A549 (cell line): ENCODE measurements at regions of chr12 and their contacts with region 1.

Region 1: GRCh38 chr12:122860346-122861090 is 25.3 kb downstream of the HIP1R start:
- DNase-seq: peak; percentile 72 to 83
- ATAC-seq: peak; percentile 63 to 87
- H3K4me3 ChIP-seq: no peak overlapping the region
- H3K27ac ChIP-seq: 0 out of 6 replicates have a peak overlapping the region, but pooled peaks of 1 of the 2 experiments have one; percentile 20
- H3K4me1 ChIP-seq: no peaks in the 10 kb centered on the region
- CTCF ChIP-seq: peak; percentile 93
- EP300 ChIP-seq: no peak
- POLR2A ChIP-seq: no peak
- RAD21 ChIP-seq: peak; percentile 96 to 98

Region 2: GRCh38 chr12:122793685-122794106 is 66.8 kb before region 1 on chr12:
- CTCF ChIA-PET with region 1: interaction called, 95 read pairs
- POLR2A ChIA-PET with region 1: no interaction called
- DNase-seq: peak; percentile 63 to 73
- ATAC-seq: peak; percentile 89 to 90
- H3K4me3 ChIP-seq: no peak overlapping the region
- H3K27ac ChIP-seq: no peak overlapping the region
- H3K4me1 ChIP-seq: no peaks in the 10 kb centered on the region
- CTCF ChIP-seq: peak; percentile 86
- EP300 ChIP-seq: no peak
- POLR2A ChIP-seq: no peak
- RAD21 ChIP-seq: peak; percentile 80 to 86

Region 3: DNA sequence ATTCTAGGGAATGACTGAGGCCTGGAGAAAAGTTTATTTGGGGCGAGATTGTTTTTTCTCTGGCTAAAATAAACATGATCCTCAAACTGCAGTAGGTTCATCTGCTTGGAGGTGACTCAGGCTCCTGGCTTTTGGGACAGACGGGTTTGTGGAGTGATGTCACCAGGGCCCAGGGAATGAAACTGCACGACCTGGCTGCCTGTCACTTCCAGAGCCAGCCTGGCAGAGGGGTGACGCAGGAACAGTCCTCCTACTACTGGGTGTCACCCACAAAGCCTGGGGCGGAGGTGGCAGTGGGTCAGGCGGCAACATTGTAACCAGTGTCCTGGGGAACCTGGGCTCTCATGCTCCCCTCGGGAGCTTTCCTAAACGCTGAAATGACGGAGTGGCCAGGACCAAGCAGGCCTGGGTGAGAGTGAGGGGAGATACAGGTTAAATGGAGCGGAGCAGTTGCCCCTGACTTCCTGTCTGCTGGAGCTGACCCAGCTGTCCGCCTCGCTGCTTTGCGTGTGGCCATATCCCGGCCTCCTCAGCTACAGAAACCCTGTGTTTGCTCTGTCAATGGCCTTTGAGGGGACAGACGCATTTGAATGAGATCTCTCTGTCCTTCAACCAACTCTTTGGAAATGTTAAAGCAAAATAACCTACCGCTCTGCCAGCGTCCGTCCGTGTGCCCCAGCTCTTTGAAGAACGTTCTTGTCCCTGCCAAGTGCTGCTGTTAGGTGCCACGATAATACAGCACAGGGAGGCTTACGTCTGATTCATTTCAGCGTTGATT is 18.8 kb before region 1 on chr12:
- CTCF ChIA-PET with region 1: interaction called, 95 read pairs
- POLR2A ChIA-PET with region 1: no interaction called
- DNase-seq: peak in 1 of 2 experiments; percentile 50
- ATAC-seq: peak; percentile 31 to 44; a peak in 3 of 6 replicates
- H3K4me3 ChIP-seq: no peak overlapping the region
- H3K27ac ChIP-seq: peak overlapping the region in 1 of 2 experiments; percentile 60; a peak in 4 of 6 replicates
- H3K4me1 ChIP-seq: peaks cover 35% of the 10 kb centered on the region
- CTCF ChIP-seq: no peak
- EP300 ChIP-seq: no peak
- POLR2A ChIP-seq: no peak
- RAD21 ChIP-seq: no peak

Region 4: DNA sequence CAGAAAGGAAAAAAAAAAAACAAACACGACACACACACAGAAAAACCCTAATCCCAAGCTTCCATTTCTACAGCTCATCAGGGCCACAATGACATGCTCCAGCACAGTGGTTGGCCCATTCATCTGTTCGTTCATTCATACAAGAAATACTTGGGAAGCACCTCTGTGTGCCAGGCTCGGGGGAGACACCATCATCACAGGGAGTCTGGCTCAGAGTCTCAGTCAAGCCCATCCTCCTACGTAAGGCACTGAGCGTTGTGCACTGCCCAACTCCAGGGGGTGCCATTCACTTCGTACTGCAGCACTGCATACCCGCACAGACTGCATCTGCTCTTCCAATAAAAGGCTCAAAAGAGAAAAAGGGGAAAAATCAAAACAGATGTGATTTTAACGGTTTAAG is 20.1 kb after region 1 on chr12:
- CTCF ChIA-PET with region 1: interaction called, 111 read pairs
- POLR2A ChIA-PET with region 1: no interaction called
- DNase-seq: peak; percentile 65 to 74
- ATAC-seq: peak; percentile 97 to 98
- H3K4me3 ChIP-seq: no peak overlapping the region
- H3K27ac ChIP-seq: no peak overlapping the region
- H3K4me1 ChIP-seq: peaks cover 11% of the 10 kb centered on the region
- CTCF ChIP-seq: peak; percentile 54
- EP300 ChIP-seq: no peak
- POLR2A ChIP-seq: no peak
- RAD21 ChIP-seq: peak; percentile 58 to 79; a peak in 4 of 5 replicates

Region 5: DNA sequence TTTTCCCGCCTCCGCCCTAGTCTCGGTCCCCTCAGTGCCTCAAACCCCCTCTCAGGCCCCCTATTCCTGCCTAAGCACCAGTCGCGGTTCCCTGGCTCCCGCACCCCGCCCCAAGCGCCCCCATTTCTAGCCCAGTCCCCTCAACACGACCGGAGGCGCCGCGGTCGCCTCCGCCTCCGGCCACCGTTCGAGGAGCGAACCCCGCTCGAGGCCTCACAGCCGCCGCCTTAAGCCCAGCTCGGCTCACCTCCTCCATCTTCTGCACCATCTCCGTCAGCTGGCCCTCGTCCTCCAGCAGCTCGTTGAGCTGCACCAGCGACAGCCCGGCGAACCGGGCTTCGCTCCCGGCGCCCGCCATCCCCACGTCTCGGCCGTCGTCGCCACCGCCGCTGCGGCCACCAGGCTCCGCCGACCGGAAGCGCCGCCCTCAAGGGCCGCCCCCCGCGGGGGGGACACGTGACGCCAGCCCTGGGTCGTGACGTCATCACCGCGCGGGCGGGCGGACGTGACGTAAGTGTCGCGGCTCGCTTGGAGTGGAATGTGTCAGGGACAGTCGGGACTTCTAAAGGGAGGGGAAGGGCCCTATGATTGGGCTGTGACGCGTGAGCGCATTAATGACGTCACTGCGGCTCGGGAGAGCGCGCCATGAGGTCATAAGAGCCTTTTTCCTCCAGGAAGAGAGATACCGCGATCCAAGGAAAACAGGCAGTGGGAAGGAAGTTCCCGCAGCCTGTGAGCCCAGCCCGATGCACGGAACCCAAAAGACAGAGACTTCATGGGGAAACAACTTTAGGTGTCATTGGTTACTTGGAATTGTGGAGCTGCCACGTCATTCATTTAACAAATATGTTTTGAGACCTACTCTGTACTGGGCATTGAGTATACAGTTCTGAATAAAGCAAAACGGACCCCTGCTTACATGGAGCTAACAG is 35.5 kb after region 1 on chr12 and contains the start of gene VPS37B:
- CTCF ChIA-PET with region 1: interaction called, 10 read pairs
- POLR2A ChIA-PET with region 1: no interaction called
- DNase-seq: peak; percentile 87 to 98
- ATAC-seq: peak; percentile 77 to 85
- H3K4me3 ChIP-seq: peak within 1 kb of the TSS; percentile 89
- H3K27ac ChIP-seq: peak within 1 kb of the TSS; percentile 89 to 97
- H3K4me1 ChIP-seq: peaks cover 51% of the 10 kb centered on the region
- CTCF ChIP-seq: no peak
- EP300 ChIP-seq: no peak
- POLR2A ChIP-seq: peak; percentile 88
- RAD21 ChIP-seq: 0 out of 5 replicates have a peak, but pooled peaks of 1 of the 2 experiments have one; percentile 21
- polyA plus RNA-seq, gene VPS37B: 14.4 and 18.6 TPM in 2 replicates

Region 6: DNA sequence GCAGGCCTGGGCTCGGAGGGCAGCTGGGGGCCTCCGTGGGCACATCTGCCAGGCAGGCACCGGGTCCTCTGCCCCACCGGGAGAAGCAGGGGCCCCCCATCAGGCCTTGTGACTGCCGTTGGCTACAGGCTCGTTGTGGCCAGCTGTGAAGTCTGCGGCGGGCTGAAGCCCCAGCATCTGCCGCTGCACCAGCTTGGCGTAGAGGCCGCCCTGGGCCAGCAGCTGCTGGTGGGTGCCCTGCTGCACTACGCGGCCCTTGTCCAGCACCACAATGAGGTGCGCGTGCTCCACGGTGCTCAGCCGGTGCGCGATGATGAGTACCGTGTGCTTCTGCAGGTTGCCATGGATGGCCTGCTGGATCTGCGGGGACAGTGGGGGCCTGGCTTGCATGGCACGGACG is 69.3 kb after region 1 on chr12:
- CTCF ChIA-PET with region 1: interaction called, 522 read pairs
- POLR2A ChIA-PET with region 1: no interaction called
- DNase-seq: no peak
- ATAC-seq: peak; percentile 14 to 26; a peak in 2 of 6 replicates
- H3K4me3 ChIP-seq: no peak overlapping the region
- H3K27ac ChIP-seq: no peak overlapping the region
- H3K4me1 ChIP-seq: 0 out of 3 replicates have a peak, but pooled peaks cover 3% of the 10 kb centered on the region
- CTCF ChIP-seq: no peak
- EP300 ChIP-seq: no peak
- POLR2A ChIP-seq: no peak
- RAD21 ChIP-seq: no peak

Region 7: GRCh38 chr12:122965851-122966722 is 105.6 kb after region 1 on chr12 and contains the start of gene ABCB9:
- CTCF ChIA-PET with region 1: interaction called, 11 read pairs
- POLR2A ChIA-PET with region 1: no interaction called
- DNase-seq: peak; percentile 90 to 93
- ATAC-seq: peak; percentile 88 to 96
- H3K4me3 ChIP-seq: peak within 1 kb of the TSS; percentile 77
- H3K27ac ChIP-seq: peak within 1 kb of the TSS; percentile 75 to 83
- H3K4me1 ChIP-seq: peaks cover 21% of the 10 kb centered on the region
- CTCF ChIP-seq: no peak
- EP300 ChIP-seq: no peak
- POLR2A ChIP-seq: peak; percentile 85
- RAD21 ChIP-seq: no peak
- polyA plus RNA-seq, gene ABCB9: 2.7 and 3.1 TPM in 2 replicates